Left ventricle myocardium superior (tissue), 1 donor: ENCODE measurements at regions of chr11 and their contacts with region 1.

Region 1: GRCh38 chr11:33863418-33864172 is 28.3 kb downstream of the LMO2 start:
- DNase-seq: no peak
- ATAC-seq: no peak

Region 2: GRCh38 chr11:34288492-34288891 is 424.9 kb after region 1 on chr11:
- intact Hi-C with region 1: no loop called
- DNase-seq: no peak
- ATAC-seq: no peak

Region 3: GRCh38 chr11:34495724-34496377 is 632.3 kb after region 1 on chr11:
- intact Hi-C with region 1: loop called (anchors 5 kb)
- DNase-seq: no peak
- ATAC-seq: no peak